ENCODE measurements at regions of chr19 and their contacts with region 1.

Region 1: GRCh38 chr19:47745010-47745901 is at the start of gene NOP53:
- DNase-seq: peak; percentile 98
- H3K4me3 Mint-ChIP-seq: peak within 1 kb of the TSS; percentile 99
- H3K27ac Mint-ChIP-seq: peak within 1 kb of the TSS; percentile 100
- H3K4me1 Mint-ChIP-seq: peaks cover 56% of the 10 kb centered on the region
- H3K27me3 Mint-ChIP-seq: no peaks in the 10 kb centered on the region
- total RNA-seq, gene NOP53: 274 to 300 TPM

Region 2: GRCh38 chr19:47514869-47515588 is 230.2 kb before region 1 on chr19 and contains the start of gene NAPA:
- CTCF ChIA-PET with region 1: no interaction called
- intact Hi-C with region 1: loop called (anchors 1 kb)
- DNase-seq: peak; percentile 100
- H3K4me3 Mint-ChIP-seq: peak within 1 kb of the TSS; percentile 98
- H3K27ac Mint-ChIP-seq: peak within 1 kb of the TSS; percentile 97
- H3K4me1 Mint-ChIP-seq: peaks cover 81% of the 10 kb centered on the region
- H3K27me3 Mint-ChIP-seq: no peaks in the 10 kb centered on the region
- total RNA-seq, gene NAPA: 72.5 to 75.1 TPM

Region 3: DNA sequence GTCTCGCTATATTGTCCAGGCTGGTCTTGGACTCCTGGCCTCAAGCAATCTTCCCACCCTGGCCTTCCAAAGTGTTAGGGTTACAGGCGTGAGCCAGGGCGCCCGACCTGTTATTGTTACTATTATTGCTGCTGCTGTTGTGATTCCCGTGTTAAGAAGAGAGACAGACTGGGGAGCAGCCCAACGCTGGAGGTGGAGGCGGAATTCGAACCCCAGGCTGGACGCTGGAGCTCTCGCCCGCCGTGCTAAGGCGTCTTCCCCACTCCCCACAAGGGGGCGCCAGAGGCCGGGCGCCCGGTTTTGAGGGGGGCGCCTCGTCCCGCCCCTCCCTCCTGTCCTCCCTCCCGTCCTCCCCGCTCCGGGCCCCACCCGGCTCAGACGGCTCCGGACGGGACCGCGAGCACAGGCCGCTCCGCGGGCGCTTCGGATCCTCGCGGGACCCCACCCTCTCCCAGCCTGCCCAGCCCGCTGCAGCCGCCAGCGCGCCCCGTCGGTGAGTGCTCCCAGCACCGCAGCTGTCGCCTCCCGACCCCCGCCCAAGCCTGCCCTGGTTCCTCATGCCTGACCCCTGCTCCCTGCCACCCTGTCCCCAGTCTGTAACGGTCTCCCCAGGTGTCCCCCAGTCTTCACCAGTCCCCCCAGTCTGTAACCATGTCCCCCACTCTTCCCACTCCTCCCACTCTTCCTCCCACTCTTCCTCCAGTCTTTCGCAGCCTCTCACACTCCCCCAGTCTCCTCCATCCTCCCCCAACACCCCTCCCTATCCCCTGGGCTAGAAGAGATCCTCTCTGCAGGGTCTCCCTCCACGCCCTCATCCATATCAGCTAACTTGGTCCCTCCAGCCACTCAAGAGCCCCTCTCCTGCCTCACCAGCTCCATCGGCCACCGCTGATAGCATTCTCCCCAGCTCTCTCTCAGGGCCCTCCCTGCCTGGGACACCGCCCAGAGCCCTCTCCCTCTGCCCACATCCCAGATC is 31.9 kb before region 1 on chr19 and contains the start of gene EHD2:
- CTCF ChIA-PET with region 1: interaction called, 103 read pairs
- intact Hi-C with region 1: loop called (anchors 1 kb)
- DNase-seq: peak; percentile 47
- H3K4me3 Mint-ChIP-seq: peak within 1 kb of the TSS; percentile 31
- H3K27ac Mint-ChIP-seq: no peak within 1 kb of the TSS
- H3K4me1 Mint-ChIP-seq: peaks cover 7% of the 10 kb centered on the region
- H3K27me3 Mint-ChIP-seq: peaks cover 35% of the 10 kb centered on the region
- total RNA-seq, gene EHD2: 0.27 to 0.41 TPM

Region 4: DNA sequence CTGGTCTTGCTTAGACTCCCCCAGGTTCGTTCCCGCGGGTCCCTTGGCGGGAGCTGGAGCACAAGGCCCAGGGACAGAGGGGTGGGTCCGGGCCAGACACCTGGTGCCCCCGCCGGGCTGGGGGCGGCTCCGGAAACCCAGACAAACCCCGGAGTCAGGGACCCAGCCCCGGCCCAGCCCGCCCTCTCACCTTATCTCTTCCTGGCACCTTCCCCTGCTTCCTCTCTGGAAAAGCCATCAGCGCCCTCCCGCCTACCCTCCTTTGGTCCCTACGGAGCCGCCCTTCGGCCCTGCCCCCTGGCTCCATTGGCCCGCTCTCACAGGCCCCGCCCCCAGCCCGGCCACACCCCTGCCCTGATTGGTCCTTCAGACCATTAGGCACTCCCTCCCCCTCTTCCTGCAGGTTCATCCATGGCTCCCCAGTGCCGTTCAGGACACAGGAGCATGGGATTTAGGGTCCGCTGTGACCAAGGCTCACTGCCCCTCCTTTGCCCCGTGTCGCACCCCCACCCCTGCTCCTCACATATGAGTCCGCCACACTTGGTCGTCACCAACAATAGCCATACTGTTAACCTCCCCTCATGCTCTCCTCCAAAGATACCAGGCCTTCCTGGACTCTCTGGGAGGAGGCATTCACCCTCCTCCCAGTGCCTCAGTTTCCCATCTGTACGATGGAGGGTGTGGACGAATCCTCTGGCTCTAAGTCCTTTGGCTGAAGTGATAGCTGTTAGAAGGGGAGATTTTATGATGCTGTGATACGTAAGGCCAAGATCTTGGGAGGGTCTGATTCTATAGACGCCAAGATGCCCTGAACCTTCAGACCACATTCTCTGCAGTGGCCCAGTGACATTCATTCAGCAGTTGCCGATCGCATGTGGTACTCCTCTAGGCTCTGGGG is 15.0 kb before region 1 on chr19:
- CTCF ChIA-PET with region 1: interaction called, 3 read pairs
- intact Hi-C with region 1: loop called (anchors 1 kb)
- DNase-seq: peak; percentile 76
- H3K4me3 Mint-ChIP-seq: peak overlapping the region; percentile 75
- H3K27ac Mint-ChIP-seq: no peak overlapping the region
- H3K4me1 Mint-ChIP-seq: peaks cover 14% of the 10 kb centered on the region
- H3K27me3 Mint-ChIP-seq: peaks cover 15% of the 10 kb centered on the region